ENCODE measurements at regions of chr12 and their contacts with region 1.

Region 1: DNA sequence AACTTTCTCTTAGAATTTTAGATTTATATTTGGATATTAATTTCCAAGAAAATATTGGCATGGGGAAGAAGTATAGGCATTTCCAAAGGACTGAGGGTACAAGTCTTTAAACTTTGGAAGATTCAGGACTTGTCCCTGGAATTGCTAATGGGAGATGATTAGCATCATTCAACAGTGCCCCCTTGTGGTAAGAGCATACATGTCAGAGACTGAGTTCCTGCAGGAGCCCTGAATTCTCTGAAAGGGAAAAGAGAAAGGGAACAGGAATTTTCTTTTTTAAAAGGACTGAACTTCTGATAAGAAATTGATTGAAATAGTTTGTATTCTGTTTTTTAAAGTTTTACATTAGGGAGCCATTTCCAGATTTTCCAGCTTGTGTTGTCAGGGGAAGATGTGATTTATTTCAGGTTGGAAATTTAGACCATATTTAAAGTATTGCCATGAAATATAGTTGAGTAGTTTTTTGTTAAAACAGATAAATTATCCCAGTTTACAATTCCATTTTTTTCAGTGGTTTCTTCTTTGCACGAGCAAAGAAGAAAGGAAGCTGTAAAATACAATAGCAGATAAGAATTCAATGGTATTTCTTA is 44.0 kb upstream of the REP15 start:
- DNase-seq: no peak

Region 2: DNA sequence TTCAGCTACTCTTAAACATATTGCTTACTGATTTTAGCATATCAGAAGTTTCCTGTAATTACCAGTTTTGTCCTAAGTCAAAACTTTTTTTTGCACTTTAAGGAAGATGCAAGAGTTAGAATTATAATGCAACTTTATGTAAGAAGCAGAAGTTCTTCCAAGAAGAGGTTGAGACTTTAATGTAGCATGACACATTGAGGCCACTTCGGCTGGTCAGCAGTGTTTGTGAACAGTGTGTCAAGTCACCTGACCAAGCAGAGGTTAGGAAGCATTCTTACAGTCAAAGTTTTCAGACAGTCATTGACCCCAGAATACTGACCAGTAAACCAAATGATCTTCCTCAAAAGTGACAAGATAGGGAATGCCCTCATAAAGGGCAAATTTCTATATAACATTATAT is 698.8 kb before region 1 on chr12:
- intact Hi-C with region 1: loop called in 1 of 2 experiments (anchors 10 kb)
- DNase-seq: no peak

Region 3: DNA sequence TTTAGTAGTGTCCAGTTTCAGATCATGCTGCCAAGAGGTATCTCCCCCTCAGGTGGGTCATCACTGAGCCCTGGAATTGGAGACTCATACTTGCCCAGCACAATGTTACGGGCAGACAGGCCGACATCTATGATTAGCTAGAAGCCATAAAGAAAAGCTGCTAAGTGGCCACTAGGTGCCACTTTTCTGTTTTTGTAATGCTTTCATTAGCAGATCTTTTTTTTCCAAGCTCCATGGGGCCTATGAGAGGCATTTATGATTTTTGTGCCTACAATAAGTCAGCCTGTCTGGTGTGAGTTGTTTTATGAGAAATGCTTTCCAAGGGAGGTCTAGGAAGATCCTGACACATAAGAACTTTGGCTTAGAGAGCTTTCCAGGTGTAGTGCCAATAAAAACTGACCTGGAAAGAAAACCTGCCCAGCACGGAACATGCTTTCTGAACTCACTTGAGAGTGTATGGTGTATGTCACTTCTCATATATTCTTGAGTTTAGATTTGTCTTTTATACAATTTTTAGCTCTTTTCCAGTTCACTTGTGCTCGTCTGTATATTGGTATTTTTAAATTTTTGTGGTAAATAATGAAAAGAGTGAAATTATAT is 227.5 kb before region 1 on chr12:
- intact Hi-C with region 1: loop called in 1 of 2 experiments (anchors 10 kb)
- DNase-seq: no peak

Region 4: DNA sequence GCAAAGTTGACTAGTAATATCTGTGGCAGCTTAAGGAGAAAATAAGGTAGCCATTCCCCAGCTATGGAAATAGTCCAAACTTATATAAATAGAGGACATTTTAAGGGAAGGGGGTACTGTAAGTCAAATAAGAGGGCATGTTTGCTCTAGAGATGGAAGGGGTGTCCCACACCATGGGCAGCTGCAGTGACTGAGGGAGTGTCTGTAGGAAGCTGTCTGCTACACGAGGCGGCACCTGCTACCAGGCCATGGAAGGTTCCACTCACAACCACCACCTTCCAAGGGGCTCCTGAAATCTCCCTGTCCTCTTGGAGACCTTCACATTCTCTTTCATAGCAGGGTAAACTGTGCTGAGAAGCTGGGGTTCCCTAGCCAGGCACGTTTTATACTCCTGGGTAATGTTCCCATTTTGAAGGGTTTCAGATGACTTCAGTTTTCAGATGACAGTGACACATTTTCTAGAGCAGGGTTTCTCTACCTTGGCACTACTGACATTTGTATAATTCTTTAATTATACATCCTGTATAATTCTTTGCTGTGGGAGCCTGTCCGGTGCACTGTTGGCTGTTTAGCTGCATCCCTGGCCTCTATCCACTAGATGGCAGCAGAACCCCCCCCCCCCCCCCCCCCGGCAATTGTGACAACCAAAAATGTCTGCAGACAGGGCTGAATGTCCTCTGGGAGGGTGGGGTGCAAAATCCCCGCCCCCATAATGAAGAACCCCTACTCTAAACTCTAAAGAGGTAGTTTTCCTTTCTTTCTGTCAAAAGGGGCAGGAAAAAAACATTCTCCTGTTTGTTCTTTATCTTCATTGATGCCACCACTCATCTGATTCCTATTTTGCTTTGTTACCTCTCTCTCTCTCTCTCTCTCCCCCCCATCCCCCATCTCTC is 217.3 kb before region 1 on chr12:
- intact Hi-C with region 1: loop called in 1 of 2 experiments (anchors 2 kb)
- DNase-seq: no peak

Region 5: DNA sequence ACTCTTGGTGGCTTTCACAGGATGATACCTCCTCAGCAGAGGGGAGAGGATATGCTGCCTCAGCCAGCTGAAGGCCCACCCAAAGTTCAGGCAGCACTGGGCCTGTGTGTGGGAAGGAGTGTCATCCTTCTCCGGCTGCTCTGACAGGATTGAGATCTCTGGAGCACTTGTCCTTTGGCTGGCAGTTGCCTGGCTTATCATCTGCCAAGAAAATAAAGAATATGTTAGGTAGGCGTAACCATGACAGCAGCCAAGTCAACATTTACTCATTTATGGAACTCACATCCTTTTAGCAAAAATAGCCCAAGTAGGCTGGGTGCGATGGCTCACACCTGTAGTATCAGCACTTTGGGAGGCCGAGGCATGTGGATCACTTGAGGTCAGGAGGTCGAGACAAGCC is 59.7 kb before region 1 on chr12:
- intact Hi-C with region 1: no loop called
- DNase-seq: no peak

Region 6: DNA sequence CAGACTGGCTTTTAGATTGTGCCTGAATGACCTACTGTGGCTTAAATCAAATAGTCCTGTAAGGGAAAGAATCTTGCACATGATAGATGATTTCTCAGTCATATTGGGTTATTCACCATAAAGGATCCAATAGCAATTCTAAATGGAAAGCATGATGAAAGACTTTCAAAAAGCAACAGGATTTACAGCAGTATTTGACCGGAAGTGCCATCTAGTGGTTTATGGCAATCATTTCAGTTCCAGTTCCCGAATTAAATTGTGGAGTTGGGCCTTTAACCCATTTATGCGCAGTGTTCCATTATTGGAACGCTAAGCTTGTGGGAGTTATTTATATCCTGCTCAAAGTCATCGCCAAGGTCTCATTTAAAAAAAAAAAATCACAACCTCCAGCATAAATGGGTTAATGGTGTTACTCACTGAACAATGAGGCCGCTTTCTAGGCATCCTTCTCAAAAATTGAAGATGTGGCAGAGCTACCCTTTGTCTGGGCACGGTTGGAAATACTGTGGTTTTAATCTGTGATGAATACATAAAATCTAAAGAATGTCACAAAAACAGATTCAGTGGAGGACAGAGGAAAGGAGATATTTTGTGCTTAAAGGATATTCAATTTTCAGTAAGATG is 16.8 kb before region 1 on chr12:
- intact Hi-C with region 1: no loop called
- DNase-seq: no peak

Measured in posterior vena cava (tissue), 2 donors.